IMR-90 (cell line): ENCODE measurements at regions of chr15 and their contacts with region 1.

Region 1: GRCh38 chr15:72540606-72541237 is 66.6 kb downstream of the ARIH1 start:
- DNase-seq: no peak
- ATAC-seq: no peak
- H3K4me3 ChIP-seq: no peak overlapping the region
- H3K27ac ChIP-seq: no peak overlapping the region
- H3K4me1 ChIP-seq: no peaks in the 10 kb centered on the region; the same call in 1 of the 2 replicates
- H3K27me3 ChIP-seq: no peaks in the 10 kb centered on the region
- CTCF ChIP-seq: no peak
- POLR2A ChIP-seq: no peak
- RAD21 ChIP-seq: no peak

Region 2: GRCh38 chr15:72365844-72366243 is 174.9 kb before region 1 on chr15:
- CTCF ChIA-PET with region 1: no interaction called
- POLR2A ChIA-PET with region 1: interaction called, 16 read pairs
- dilution Hi-C with region 1: no loop called
- in situ Hi-C with region 1: no loop called
- intact Hi-C with region 1: no loop called
- DNase-seq: no peak
- ATAC-seq: no peak
- H3K4me3 ChIP-seq: no peak overlapping the region
- H3K27ac ChIP-seq: no peak overlapping the region
- H3K4me1 ChIP-seq: no peaks in the 10 kb centered on the region
- H3K27me3 ChIP-seq: no peaks in the 10 kb centered on the region
- CTCF ChIP-seq: no peak
- POLR2A ChIP-seq: no peak
- RAD21 ChIP-seq: no peak

Region 3: GRCh38 chr15:73058424-73058823 is 517.7 kb after region 1 on chr15:
- CTCF ChIA-PET with region 1: no interaction called
- POLR2A ChIA-PET with region 1: no interaction called
- dilution Hi-C with region 1: no loop called
- in situ Hi-C with region 1: no loop called
- intact Hi-C with region 1: no loop called
- DNase-seq: no peak
- ATAC-seq: no peak
- H3K4me3 ChIP-seq: no peak overlapping the region
- H3K27ac ChIP-seq: no peak overlapping the region
- H3K4me1 ChIP-seq: no peaks in the 10 kb centered on the region; the same call in 1 of the 2 replicates
- H3K27me3 ChIP-seq: peaks cover 5% of the 10 kb centered on the region; the same call in 1 of the 2 replicates
- CTCF ChIP-seq: no peak
- POLR2A ChIP-seq: no peak
- RAD21 ChIP-seq: no peak